ENCODE measurements at regions of chr17 and their contacts with region 1.

Region 1: GRCh38 chr17:77331301-77331864 is 190.6 kb downstream of the SEC14L1 start:
- DNase-seq: peak; percentile 97
- H3K4me3 Mint-ChIP-seq: peak overlapping the region; percentile 64
- H3K27ac Mint-ChIP-seq: peak overlapping the region; percentile 78
- H3K4me1 Mint-ChIP-seq: peaks cover 38% of the 10 kb centered on the region
- H3K27me3 Mint-ChIP-seq: no peaks in the 10 kb centered on the region

Region 2: GRCh38 chr17:77164483-77165091 is 166.8 kb before region 1 on chr17:
- CTCF ChIA-PET with region 1: no interaction called
- POLR2A ChIA-PET with region 1: no interaction called
- intact Hi-C with region 1: no loop called
- DNase-seq: no peak
- H3K4me3 Mint-ChIP-seq: no peak overlapping the region
- H3K27ac Mint-ChIP-seq: no peak overlapping the region
- H3K4me1 Mint-ChIP-seq: peaks cover 34% of the 10 kb centered on the region
- H3K27me3 Mint-ChIP-seq: no peaks in the 10 kb centered on the region

Region 3: DNA sequence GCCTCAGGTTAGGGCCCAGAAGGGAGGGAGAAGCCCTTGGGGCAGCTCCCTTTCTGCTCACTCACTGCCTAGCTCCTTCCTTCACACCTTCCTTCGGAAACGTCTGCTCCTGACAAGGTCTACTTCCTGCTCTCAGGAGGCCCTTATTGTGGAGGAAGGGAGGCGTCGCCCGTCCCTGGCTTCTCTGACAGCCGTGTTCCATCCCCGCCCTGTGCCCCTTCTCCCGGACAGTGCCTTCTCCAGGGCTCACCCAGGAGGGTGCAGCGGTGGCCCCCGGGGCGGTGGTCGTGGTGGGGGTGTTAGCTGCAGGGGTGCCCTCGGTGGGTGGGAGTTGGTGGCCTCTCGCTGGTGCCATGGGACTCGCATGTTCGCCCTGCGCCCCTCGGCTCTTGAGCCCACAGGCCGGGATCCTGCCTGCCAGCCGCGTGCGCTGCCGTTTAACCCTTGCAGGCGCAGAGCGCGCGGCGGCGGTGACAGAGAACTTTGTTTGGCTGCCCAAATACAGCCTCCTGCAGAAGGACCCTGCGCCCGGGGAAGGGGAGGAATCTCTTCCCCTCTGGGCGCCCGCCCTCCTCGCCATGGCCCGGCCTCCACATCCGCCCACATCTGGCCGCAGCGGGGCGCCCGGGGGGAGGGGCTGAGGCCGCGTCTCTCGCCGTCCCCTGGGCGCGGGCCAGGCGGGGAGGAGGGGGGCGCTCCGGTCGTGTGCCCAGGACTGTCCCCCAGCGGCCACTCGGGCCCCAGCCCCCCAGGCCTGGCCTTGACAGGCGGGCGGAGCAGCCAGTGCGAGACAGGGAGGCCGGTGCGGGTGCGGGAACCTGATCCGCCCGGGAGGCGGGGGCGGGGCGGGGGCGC is 41.3 kb after region 1 on chr17:
- CTCF ChIA-PET with region 1: interaction called, 13 read pairs
- POLR2A ChIA-PET with region 1: interaction called, 4 read pairs
- intact Hi-C with region 1: loop called (anchors 1 kb)
- DNase-seq: peak; percentile 75
- H3K4me3 Mint-ChIP-seq: peak overlapping the region; percentile 73
- H3K27ac Mint-ChIP-seq: peak overlapping the region; percentile 73
- H3K4me1 Mint-ChIP-seq: peaks cover 62% of the 10 kb centered on the region
- H3K27me3 Mint-ChIP-seq: no peaks in the 10 kb centered on the region

Region 4: GRCh38 chr17:77429919-77430752 is 98.8 kb after region 1 on chr17:
- CTCF ChIA-PET with region 1: interaction called, 49 read pairs
- POLR2A ChIA-PET with region 1: no interaction called
- intact Hi-C with region 1: no loop called
- DNase-seq: peak; percentile 90
- H3K4me3 Mint-ChIP-seq: no peak overlapping the region
- H3K27ac Mint-ChIP-seq: no peak overlapping the region
- H3K4me1 Mint-ChIP-seq: peaks cover 83% of the 10 kb centered on the region
- H3K27me3 Mint-ChIP-seq: no peaks in the 10 kb centered on the region

Region 5: DNA sequence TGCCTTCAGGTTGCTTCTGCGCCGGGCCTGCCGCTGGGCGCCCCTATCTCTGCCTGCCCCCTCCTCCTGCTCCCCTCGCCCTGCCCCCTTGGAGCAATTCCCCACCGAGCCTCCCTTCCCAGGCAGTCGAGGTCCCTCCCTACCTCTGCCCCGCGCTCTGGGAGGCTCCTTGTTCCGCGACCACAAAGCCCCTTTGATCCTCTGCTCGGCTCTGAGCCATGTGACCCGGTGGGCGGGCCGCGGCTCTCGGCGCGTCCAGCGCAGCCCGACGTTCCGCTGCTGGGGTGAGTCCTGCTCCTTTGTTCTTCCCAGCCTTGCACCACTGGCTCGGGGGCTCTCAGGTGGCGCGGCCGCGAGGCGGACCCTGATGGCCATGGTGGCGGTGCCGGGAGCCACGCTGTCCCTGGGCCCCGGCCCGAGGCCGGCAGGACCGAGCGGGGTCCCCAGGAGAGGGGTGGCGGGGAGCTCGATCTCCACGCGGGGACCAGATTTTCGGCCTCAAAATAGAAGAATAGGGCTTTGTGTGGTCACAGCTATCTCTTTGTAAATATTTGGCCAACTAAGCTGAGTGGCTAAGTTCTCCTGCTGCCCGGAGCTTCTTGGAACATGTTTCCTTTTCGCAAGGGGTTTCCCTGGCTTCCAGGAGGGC is 120.0 kb after region 1 on chr17:
- CTCF ChIA-PET with region 1: interaction called, 10 read pairs
- POLR2A ChIA-PET with region 1: interaction called, 5 read pairs
- intact Hi-C with region 1: no loop called
- DNase-seq: peak; percentile 83
- H3K4me3 Mint-ChIP-seq: peak overlapping the region; percentile 91
- H3K27ac Mint-ChIP-seq: peak overlapping the region; percentile 100
- H3K4me1 Mint-ChIP-seq: peaks cover 41% of the 10 kb centered on the region
- H3K27me3 Mint-ChIP-seq: no peaks in the 10 kb centered on the region